GM12878 (cell line): ENCODE measurements at regions of chr6 and their contacts with region 1.

Region 1: DNA sequence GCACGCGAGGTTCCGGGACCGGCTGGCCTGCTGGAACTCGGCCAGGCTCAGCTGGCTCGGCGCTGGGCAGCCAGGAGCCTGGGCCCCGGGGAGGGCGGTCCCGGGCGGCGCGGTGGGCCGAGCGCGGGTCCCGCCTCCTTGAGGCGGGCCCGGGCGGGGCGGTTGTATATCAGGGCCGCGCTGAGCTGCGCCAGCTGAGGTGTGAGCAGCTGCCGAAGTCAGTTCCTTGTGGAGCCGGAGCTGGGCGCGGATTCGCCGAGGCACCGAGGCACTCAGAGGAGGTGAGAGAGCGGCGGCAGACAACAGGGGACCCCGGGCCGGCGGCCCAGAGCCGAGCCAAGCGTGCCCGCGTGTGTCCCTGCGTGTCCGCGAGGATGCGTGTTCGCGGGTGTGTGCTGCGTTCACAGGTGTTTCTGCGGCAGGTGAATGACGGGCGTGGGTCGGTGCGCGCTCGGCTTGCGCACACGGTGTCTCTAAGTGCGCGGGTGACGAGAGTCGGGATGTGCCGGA is at the start of gene CDKN1A:
- DNase-seq: no peak
- ATAC-seq: peak; percentile 75
- H3K4me3 ChIP-seq: peak within 1 kb of the TSS; percentile 75
- H3K27ac ChIP-seq: peak within 1 kb of the TSS; percentile 88
- H3K4me1 ChIP-seq: peaks cover 44% of the 10 kb centered on the region
- H3K27me3 ChIP-seq: no peaks in the 10 kb centered on the region
- CTCF ChIP-seq: no peak
- EP300 ChIP-seq: 0 out of 4 replicates have a peak, but pooled peaks of 1 of the 2 experiments have one; percentile 38
- POLR2A ChIP-seq: peak; percentile 95
- RAD21 ChIP-seq: no peak
- polyA plus RNA-seq, gene CDKN1A: 25.2 to 48.4 TPM

Region 2: DNA sequence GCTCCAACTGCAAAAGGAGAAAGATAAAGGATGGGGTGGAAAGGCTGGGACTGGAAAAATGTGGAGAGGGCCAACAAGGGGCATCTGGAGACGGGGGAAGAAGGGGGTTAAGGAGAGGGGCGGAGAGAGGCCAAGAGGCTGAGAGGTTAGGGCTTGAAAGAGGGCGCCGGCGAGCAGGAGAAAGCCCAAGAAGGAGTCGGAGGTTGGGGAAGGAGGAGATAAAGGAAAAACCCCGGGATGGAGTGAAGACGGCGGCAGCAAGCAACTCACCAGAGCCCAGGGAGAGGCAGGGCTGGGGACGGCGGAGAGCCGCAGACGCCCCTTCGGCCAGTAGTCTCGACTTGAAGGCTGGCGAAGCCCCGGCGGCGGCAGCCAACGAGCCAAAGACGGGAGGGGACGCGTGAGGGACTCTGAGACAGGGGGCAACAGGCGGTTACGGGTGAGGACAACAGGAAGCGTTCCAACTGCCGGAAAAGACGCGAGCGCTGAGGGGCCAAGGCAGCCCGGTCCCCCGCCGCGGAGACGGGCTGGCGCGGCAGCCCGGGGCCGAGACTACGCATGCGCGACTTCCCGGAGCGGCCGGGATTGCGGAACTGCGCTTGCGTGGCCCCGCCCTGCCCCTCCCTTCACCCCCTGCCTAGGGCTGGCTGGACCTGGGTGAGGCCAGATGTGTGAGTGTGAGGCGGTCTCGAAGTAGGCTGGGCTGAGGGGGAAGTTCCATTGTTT is 131.5 kb before region 1 on chr6 and contains the start of gene STK38:
- CTCF ChIA-PET with region 1: no interaction called
- POLR2A ChIA-PET with region 1: interaction called, 3 read pairs
- RAD21 ChIA-PET with region 1: interaction called, 4 read pairs
- SMC1A ChIA-PET with region 1: no interaction called
- in situ Hi-C with region 1: no loop called
- intact Hi-C with region 1: loop called (anchors 5 kb)
- DNase-seq: peak; percentile 71
- ATAC-seq: peak; percentile 94
- H3K4me3 ChIP-seq: peak within 1 kb of the TSS; percentile 97
- H3K27ac ChIP-seq: peak within 1 kb of the TSS; percentile 84
- H3K4me1 ChIP-seq: peaks cover 19% of the 10 kb centered on the region
- H3K27me3 ChIP-seq: no peaks in the 10 kb centered on the region
- CTCF ChIP-seq: peak; percentile 10 to 39 (median 35); a peak in 3 of 6 replicates
- EP300 ChIP-seq: no peak
- POLR2A ChIP-seq: peak; percentile 94
- RAD21 ChIP-seq: peak; percentile 14; the same call in 1 of the 2 replicates
- polyA plus RNA-seq, gene STK38: 4.1 to 6.6 TPM

Region 3: DNA sequence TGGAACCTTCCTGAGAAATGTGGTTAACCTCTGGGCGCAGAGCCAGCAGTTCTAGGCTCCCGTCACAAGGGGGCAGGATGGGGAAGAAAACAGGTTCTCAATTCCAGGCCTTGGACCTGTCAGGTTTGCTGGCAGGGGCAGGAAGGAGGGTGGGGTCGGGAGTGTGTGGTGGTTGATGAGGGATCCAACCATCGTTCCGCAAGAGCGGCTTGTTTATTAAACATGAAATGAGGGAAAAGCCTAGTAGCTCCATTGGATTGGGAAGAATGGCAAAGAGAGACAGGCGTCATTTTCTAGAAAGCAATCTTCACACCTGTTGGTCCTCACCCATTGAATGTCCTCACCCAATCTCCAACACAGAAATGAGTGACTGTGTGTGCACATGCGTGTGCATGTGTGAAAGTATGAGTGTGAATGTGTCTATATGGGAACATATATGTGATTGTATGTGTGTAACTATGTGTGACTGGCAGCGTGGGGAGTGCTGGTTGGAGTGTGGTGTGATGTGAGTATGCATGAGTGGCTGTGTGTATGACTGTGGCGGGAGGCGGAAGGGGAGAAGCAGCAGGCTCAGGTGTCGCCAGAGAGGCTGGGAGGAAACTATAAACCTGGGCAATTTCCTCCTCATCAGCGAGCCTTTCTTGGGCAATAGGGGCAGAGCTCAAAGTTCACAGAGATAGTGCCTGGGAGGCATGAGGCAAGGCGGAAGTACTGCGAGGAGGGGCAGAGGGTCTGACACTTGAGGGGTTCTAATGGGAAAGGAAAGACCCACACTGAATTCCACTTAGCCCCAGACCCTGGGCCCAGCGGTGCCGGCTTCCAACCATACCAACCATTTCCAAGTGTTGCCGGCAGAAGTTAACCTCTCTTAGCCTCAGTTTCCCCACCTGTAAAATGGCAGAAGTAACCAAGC is 54.8 kb before region 1 on chr6:
- CTCF ChIA-PET with region 1: interaction called, 63 read pairs
- POLR2A ChIA-PET with region 1: interaction called, 31 read pairs
- RAD21 ChIA-PET with region 1: interaction called, 44 read pairs
- SMC1A ChIA-PET with region 1: interaction called, 42 read pairs
- in situ Hi-C with region 1: loop called (anchors 5 kb)
- intact Hi-C with region 1: loop called (anchors 1 kb)
- DNase-seq: peak; percentile 68
- ATAC-seq: peak; percentile 84
- H3K4me3 ChIP-seq: no peak overlapping the region
- H3K27ac ChIP-seq: peak overlapping the region; percentile 63
- H3K4me1 ChIP-seq: peaks cover 35% of the 10 kb centered on the region
- H3K27me3 ChIP-seq: no peaks in the 10 kb centered on the region
- CTCF ChIP-seq: peak; percentile 89 to 95 (median 95)
- EP300 ChIP-seq: no peak
- POLR2A ChIP-seq: no peak
- RAD21 ChIP-seq: peak; percentile 98

Region 4: GRCh38 chr6:36666726-36667591 is 11.6 kb before region 1 on chr6:
- CTCF ChIA-PET with region 1: interaction called, 146 read pairs
- POLR2A ChIA-PET with region 1: interaction called, 243 read pairs
- RAD21 ChIA-PET with region 1: interaction called, 195 read pairs
- SMC1A ChIA-PET with region 1: interaction called, 199 read pairs
- in situ Hi-C with region 1: no loop called
- intact Hi-C with region 1: loop called (anchors 1 kb)
- DNase-seq: peak; percentile 91
- ATAC-seq: peak; percentile 86
- H3K4me3 ChIP-seq: peak overlapping the region; percentile 41; the same call in 1 of the 2 replicates
- H3K27ac ChIP-seq: peak overlapping the region; percentile 92
- H3K4me1 ChIP-seq: peaks cover 64% of the 10 kb centered on the region
- H3K27me3 ChIP-seq: no peaks in the 10 kb centered on the region
- CTCF ChIP-seq: no peak; a peak in 1 of 6 replicates
- EP300 ChIP-seq: peak; percentile 94 to 97
- POLR2A ChIP-seq: peak; percentile 49
- RAD21 ChIP-seq: no peak; the same call in 1 of the 2 replicates

Region 5: DNA sequence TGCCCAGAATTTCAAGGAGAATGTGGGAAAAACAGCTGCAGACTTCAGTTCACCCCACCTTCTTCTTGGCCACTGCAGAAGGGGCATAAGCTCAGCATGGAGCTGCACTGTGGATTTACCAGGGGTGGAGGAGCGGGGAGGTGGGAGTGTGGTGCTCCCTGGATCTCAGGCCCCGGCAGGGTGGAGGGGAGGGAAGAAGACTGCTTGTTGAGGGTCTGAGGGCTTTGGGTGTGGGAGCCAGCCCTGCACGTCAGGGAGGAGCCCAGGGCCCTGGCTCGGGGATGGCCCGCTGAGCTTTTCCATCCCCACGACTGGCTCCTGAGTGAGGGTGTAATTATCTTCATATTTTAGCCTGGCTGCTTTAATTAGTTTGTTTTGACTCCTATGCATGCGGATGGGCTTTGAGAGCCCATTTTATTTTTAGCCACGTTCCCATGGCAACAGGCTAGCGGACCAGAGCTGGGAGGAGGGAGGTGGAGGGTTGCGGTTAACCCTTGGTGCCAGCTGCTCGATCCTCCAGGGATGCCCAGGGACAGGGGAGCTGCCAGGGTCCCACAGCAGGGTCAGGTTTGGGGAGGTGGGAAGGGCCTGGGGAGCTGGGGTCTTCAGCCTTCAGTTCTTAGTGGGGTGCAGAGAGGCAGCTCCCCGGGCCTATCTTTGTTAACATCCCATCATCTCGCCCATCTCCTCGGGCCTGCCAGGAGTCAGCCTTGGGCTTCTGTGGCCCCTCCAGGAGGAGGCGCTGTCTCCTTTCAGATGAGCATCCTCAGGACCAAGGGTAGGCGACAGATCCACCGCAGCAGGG is 87.2 kb after region 1 on chr6:
- CTCF ChIA-PET with region 1: interaction called, 109 read pairs
- POLR2A ChIA-PET with region 1: interaction called, 3 read pairs
- RAD21 ChIA-PET with region 1: interaction called, 3 read pairs
- SMC1A ChIA-PET with region 1: interaction called, 120 read pairs
- in situ Hi-C with region 1: no loop called
- intact Hi-C with region 1: no loop called
- DNase-seq: no peak
- ATAC-seq: peak; percentile 98
- H3K4me3 ChIP-seq: no peak overlapping the region
- H3K27ac ChIP-seq: no peak overlapping the region
- H3K4me1 ChIP-seq: peaks cover 17% of the 10 kb centered on the region
- H3K27me3 ChIP-seq: no peaks in the 10 kb centered on the region
- CTCF ChIP-seq: peak; percentile 97 to 98 (median 98); a peak in 5 of 6 replicates
- EP300 ChIP-seq: no peak
- POLR2A ChIP-seq: no peak
- RAD21 ChIP-seq: peak; percentile 98